KBM-7 (cell line): ENCODE measurements at regions of chr1 and their contacts with region 1.

Region 1: DNA sequence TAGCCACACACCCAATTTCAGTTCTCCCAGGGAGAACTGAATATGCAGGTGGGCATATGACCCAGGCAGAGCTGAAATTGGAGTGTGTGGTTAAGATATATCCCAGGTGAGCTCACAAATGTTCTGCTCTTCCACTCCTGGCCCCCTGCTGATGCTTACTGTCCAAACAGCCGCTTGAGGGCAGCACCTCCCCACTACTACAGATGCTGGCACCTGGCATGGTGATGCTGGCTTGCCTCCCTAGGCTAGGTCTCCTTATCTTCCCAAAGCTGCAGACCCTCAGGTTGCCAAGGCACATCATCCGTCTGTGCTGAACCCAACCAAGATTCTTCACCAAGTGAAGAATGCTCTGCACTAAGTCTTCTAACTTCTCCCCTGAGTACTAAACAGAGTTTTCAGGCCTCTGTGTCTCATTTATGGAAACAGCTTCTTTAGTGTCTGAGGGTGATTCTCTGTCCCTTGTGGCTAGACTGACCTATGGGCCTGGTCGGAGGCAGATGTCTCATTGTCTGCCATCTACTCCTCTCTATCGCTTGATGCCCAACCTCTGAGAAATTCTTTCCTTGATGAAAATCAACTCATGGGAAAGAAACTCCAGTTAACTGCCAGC is 27.2 kb downstream of the XCL1 start:
- DNase-seq: peak; percentile 70

Region 2: GRCh38 chr1:167957710-167958109 is 645.9 kb before region 1 on chr1:
- in situ Hi-C with region 1: no loop called
- DNase-seq: no peak

Region 3: DNA sequence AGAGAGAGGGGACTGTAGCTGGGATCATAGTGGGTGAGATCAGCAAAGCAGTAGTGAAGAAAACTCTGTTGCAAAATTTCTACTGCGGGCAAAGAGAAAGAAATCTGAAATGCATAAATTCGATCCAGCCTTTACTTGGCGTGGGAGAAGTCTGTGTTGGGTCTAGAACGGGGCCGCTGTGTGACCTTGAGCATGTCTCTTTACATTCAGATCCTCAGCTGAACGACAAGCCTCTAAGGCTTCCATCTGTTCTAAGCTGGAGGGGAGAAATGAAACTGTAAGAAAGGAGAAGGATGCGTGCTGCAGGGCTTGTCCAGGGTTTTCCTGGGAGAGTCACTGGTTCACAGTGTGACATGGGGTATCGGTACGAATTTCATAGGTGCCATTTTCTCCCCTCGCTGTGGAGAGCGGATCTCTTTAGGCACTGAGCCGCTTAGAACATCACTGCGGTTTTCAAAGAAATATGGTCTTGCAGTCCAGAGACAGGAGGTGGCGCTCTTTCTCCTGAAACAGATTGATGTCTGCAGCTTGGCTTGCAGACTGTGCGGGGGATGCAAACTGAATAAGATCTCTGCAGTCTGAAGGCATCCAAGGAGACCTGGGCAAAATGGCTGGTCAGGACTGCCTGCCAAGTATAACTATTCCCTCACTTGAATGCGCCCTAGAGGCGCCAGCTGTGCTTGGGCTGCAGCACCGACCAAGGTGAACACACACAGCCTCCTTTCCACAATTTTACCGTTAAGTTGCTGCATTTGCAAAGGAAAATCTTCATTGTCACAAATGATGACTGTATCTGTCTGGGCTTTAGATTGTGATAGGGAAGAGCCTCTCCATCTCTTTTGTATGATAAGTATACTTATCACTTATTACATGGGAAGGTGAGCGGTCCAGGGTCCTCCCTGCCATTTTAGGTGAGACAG is 163.9 kb before region 1 on chr1:
- in situ Hi-C with region 1: loop called (anchors 10 kb)
- DNase-seq: peak; percentile 93

Region 4: DNA sequence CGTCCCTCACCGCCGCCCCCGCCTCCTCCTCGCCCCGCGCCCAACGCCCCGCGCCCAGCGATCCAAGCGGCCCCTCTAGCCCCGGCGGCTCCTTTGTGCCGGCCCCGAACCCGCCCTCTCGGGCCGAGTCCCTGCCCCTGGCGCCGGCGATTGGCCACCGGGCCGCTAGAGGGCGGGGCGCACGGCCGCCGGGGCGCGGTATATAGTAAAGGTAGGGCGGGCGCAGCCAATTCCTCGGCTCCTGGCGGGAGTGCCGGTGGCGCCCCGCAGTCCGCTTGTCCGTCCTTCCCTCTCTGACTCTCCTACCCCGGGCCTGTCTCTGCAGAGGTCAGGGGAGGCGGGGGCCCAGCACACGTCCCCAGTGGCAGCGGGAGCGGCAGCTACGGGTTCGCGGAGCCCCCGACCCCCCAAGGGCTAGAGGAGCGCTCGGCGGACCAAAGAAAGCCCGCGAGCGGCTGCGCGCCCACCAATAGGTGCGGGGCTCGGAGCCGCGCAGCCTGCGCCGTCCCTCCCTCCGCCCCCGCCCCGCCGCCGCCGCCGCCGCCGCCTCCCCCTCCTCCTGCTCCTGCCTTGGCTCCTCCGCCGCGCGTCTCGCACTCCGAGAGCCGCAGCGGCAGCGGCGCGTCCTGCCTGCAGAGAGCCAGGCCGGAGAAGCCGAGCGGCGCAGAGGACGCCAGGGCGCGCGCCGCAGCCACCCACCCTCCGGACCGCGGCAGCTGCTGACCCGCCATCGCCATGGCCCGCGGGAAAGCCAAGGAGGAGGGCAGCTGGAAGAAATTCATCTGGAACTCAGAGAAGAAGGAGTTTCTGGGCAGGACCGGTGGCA is 502.7 kb after region 1 on chr1 and contains the start of gene ATP1B1:
- in situ Hi-C with region 1: loop called (anchors 25 kb)
- DNase-seq: peak; percentile 93

Region 5: GRCh38 chr1:169367486-169368405 is 764.1 kb after region 1 on chr1 and contains the starts of genes BLZF1 and NME7:
- in situ Hi-C with region 1: loop called (anchors 25 kb)
- DNase-seq: peak; percentile 99